ENCODE measurements at regions of chr1 and their contacts with region 1.

Region 1: DNA sequence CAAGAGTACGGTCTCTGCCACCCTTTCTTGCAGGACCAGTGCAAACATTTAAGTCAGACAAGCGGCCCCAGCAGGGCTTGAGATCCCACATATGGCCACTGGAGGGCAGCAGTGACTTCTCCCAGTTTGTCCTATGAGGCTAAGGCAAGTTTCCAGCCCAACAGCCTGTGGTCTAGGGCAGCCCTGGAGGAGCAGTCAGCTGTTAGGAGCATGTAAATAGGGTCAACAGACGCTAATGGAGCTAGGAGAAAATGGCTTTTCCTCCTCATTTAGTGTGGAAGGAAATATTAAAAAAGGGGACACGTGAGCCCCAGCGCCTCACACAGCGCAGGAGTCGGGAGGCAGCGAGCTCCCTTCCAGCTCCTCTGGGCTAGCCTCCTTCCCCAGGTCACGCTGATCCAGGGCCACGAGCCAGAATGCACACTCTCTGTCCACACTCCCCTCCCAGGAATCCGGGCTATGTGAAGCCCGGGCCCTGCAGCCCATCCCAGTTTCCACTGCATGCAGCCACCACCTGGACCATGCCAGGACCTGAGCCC is 95.6 kb downstream of the LAMC2 start:
- DNase-seq: peak; percentile 81
- H3K4me3 ChIP-seq: no peak overlapping the region; a peak in 1 of 4 replicates
- H3K27ac ChIP-seq: no peak overlapping the region
- H3K4me1 ChIP-seq: peaks cover 22 to 24% of the 10 kb centered on the region in 2 experiments; a peak in 3 of 4 replicates
- H3K27me3 ChIP-seq: no peaks in the 10 kb centered on the region
- CTCF ChIP-seq: peak; percentile 94
- EP300 ChIP-seq: no peak
- RAD21 ChIP-seq: peak; percentile 91

Region 2: GRCh38 chr1:183270541-183271141 is 11.0 kb before region 1 on chr1:
- CTCF ChIA-PET with region 1: interaction called, 18 read pairs
- POLR2A ChIA-PET with region 1: no interaction called
- DNase-seq: peak; percentile 53
- H3K4me3 ChIP-seq: no peak overlapping the region
- H3K27ac ChIP-seq: peak overlapping the region; percentile 34 to 85; a peak in 3 of 4 replicates
- H3K4me1 ChIP-seq: peaks cover 13 to 22% of the 10 kb centered on the region in 2 experiments
- H3K27me3 ChIP-seq: no peaks in the 10 kb centered on the region
- CTCF ChIP-seq: no peak
- EP300 ChIP-seq: no peak
- RAD21 ChIP-seq: no peak

Region 3: GRCh38 chr1:183291802-183292514 is 10.3 kb after region 1 on chr1:
- CTCF ChIA-PET with region 1: interaction called, 25 read pairs
- POLR2A ChIA-PET with region 1: interaction called, 3 read pairs
- DNase-seq: no peak
- H3K4me3 ChIP-seq: no peak overlapping the region
- H3K27ac ChIP-seq: no peak overlapping the region
- H3K4me1 ChIP-seq: peaks cover 0 to 8% of the 10 kb centered on the region in 2 experiments; a peak in 1 of 4 replicates
- H3K27me3 ChIP-seq: no peaks in the 10 kb centered on the region
- CTCF ChIP-seq: no peak
- EP300 ChIP-seq: no peak
- RAD21 ChIP-seq: no peak

Region 4: DNA sequence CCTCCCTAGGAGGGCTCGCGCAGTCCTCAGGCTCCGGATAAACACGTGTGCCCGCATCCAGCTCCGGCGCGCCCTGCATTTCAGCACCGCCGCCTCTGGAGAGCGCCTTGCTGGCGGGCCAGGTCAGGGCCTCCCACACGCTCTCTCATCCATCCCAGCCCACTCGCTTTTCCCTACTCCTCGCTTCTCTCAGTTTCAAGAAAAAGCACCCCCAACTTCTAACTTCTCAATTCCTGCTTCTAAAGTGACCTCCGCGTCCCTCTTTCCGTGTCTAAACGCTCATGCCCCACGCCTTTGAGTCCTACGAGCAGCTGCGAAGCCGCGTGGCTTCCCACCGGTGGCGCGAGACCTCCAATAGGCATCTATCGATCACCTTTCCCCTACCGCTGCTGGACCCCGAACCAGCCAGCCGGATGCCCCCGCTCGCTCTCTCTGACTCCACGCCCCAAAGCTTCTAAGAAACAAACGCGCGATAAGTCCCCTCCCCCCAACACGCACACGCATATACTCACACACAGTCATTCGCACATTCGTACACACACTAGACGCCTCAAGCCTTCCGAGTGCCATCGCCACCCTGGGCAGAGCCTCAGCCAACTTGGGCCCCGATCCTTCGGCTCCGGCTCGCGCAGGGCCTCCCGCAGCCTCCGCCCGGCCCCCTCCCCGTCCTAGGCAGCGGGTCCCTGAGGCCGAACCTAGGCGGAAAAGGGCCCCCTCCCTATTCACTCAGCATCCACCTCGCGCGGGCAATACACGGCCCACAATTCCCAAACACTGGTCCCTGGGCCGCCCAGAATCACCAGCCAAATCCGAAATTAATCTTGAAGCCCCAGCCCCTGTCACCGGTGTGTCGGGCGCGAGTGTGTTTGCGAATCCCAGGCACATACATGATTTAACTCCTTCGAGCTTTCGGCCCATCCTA is 135.5 kb after region 1 on chr1:
- CTCF ChIA-PET with region 1: interaction called, 10 read pairs
- POLR2A ChIA-PET with region 1: no interaction called
- DNase-seq: peak; percentile 83
- H3K4me3 ChIP-seq: peak overlapping the region; percentile 50 to 60
- H3K27ac ChIP-seq: peak overlapping the region in 1 of 2 experiments; percentile 67; a peak in 2 of 4 replicates
- H3K4me1 ChIP-seq: peaks cover 7 to 8% of the 10 kb centered on the region in 2 experiments; a peak in 2 of 4 replicates
- H3K27me3 ChIP-seq: peaks cover 34% of the 10 kb centered on the region
- CTCF ChIP-seq: no peak
- EP300 ChIP-seq: no peak
- RAD21 ChIP-seq: no peak

Measured in SK-N-SH (cell line).